GM23248 (cell line): ENCODE measurements at regions of chr17 and their contacts with region 1.

Region 1: GRCh38 chr17:29807520-29808351 is 122.3 kb downstream of the SSH2 start:
- DNase-seq: peak; percentile 84
- H3K4me3 ChIP-seq: no peak overlapping the region
- H3K27ac ChIP-seq: peak overlapping the region; percentile 60
- H3K4me1 ChIP-seq: peaks cover 10% of the 10 kb centered on the region
- H3K27me3 ChIP-seq: no peaks in the 10 kb centered on the region

Region 2: DNA sequence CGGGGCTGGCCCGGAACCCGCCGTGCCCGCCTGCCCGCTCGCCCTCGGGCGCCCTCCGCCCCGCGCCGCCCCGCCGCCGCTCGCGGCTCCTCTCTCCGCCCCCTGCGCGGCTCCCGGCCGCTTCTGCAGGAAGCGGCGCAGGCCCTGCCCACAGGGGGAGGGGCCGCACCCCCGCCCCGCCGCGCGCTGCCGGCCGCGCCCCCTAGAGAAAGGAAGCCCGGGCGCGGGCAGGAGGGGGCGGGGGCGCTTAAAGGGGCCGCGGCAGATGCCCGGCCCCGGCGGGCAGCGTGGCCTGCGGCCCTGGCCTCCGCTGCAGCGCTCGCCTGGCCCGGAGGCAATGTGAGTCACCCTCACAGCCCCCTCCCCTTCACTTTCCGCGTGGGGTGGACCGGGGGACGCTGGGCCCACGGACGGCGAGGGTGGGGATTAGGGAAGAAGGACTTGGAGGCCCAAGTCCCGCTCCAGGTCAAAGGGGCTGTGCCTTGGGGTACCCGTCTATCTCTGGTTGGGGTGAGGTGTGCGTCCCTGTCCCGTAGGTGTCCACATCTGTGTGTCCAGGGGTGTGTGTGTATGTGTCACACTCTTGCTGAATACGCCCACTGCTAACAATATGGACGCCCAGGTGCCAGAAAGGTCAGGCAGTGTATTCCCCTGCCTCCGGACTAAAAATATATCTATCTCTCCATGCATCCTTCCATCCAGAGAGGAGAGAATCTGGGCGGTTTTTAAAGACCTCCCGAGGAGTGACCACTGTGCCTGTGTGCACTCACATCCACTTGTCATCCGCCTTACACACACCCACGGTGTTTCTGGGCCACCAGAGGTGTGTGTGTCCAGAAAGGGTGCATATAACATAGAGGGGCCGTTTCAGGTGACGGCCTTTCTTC is 218.0 kb before region 1 on chr17 and contains the start of gene GIT1:
- in situ Hi-C with region 1: no loop called
- DNase-seq: peak; percentile 96
- H3K4me3 ChIP-seq: peak within 1 kb of the TSS; percentile 94
- H3K27ac ChIP-seq: peak within 1 kb of the TSS; percentile 56
- H3K4me1 ChIP-seq: peaks cover 30% of the 10 kb centered on the region
- H3K27me3 ChIP-seq: no peaks in the 10 kb centered on the region
- total RNA-seq, gene GIT1: 17.1 and 19.5 TPM in 2 replicates

Region 3: DNA sequence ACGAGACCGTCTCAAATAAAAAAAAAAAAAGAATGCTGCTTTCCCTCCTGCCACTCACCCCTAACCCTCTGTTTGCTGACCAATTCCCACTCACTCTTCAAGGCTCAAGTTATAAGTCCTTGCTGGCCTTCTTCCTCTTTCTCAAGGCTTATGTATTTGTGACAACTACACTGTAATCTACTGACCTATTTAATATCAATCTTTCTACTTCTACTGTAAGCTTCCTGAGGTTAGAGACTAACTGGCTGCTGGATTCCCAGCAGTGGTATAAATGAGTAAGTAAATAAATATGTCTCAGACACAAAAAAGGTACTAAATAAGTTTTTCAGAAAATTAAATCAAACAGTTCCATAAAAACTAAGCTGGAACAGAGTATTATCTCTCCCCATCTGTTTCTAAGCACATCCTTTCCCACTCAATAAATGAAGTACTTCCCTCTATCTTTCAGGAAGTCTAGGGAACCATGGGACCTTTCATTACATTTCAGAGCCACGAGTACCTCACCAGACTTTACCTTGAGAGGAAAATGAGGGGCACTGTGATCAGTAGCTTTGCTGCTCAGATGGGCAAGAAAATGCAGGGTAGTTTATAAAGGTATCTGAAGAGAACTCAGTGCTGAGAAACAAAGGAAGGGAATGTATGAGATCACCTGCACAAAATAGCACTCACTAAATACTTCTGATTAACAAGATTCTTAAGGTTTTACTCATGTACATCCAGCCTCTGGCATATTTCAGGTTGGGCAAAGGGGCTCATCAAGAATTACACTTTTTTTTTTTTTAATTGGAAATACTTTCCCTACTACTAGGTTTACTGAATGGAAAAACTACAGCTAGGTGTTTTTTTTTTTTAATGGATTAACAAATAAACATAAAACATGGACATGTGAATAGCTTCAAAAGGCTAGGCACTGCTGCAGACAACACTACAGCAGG is 111.5 kb after region 1 on chr17:
- in situ Hi-C with region 1: no loop called
- DNase-seq: peak; percentile 62
- H3K4me3 ChIP-seq: peak overlapping the region; percentile 43; the same call in 1 of the 2 replicates
- H3K27ac ChIP-seq: peak overlapping the region; percentile 71
- H3K4me1 ChIP-seq: peaks cover 22% of the 10 kb centered on the region
- H3K27me3 ChIP-seq: no peaks in the 10 kb centered on the region

Region 4: DNA sequence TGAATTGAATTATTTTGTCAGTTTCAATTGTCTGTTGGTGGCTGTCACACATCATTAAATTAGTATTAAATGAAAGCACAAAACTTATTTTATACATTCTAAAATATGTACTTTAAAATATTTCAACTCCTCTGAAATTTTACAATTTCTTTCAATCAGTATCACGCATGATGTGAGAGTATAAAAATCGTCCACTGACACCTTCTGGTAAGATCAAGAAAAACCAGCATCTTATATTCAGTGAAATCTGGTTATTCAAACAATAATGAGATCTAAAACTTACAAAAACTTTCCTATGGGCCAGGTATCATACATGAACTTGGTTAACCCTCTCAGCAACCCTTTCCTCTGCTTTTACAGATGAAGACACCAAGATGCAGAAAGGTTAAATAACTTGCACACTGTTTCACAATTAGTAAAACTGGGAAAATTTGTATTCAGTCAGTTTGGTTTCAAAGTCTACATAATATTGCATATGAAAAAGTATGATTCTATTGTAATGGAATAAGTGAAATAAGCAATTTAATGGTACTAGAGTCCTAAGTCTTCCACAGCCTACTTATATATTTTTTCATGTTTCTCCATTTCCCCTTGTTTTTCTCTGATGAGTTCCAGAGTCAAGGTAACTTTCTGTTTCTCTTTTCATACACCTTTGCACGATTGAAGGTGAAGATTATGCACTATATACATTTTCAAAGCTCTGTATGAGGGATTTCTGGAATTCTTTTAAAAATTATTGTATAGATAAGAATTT is 192.4 kb after region 1 on chr17:
- in situ Hi-C with region 1: loop called (anchors 10 kb)
- DNase-seq: peak; percentile 30
- H3K4me3 ChIP-seq: no peak overlapping the region
- H3K27ac ChIP-seq: no peak overlapping the region
- H3K4me1 ChIP-seq: no peaks in the 10 kb centered on the region; the same call in 1 of the 2 replicates
- H3K27me3 ChIP-seq: no peaks in the 10 kb centered on the region

Region 5: DNA sequence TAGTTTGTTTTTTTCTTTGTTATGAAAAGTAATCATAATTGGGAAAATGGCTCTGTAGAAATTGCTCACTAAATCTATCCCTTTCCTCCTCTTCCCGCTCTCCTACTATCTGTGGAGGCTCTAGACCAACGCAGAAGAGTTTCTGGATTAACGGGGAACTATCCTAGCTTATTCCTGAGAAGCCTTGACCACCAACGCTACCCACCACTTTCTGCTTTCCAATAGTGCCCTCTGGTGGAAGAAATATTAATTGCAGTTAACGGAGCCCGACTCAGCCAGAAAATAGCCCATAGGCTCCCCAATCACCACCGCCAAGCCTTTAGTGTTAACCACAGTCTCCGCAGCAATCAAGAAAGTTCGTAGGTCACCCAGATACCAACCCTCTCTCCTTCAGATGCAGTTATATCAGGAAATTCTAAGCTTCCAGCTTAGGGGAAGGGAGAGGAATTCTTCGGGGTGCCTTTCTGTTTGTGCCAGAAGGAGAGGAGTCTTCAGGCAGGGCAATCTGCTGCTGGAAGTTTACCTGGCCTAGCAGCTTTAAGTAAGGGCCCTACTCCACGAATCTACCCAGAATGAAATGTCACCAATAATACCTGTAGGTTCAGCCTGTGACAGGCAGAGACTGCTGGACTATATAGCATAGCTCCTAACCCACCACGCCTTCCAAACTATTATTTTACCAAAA is 285.9 kb after region 1 on chr17:
- in situ Hi-C with region 1: loop called (anchors 10 kb)
- DNase-seq: peak; percentile 71
- H3K4me3 ChIP-seq: no peak overlapping the region
- H3K27ac ChIP-seq: no peak overlapping the region
- H3K4me1 ChIP-seq: peaks cover 31% of the 10 kb centered on the region
- H3K27me3 ChIP-seq: no peaks in the 10 kb centered on the region